ENCODE measurements at regions of chr1 and their contacts with region 1.

Region 1: GRCh38 chr1:55428944-55429931 is 214.1 kb upstream of the USP24 start:
- DNase-seq: peak; percentile 95 to 100
- H3K4me3 ChIP-seq: no peak overlapping the region
- H3K27ac ChIP-seq: peak overlapping the region; percentile 77
- H3K4me1 ChIP-seq: peaks cover 47% of the 10 kb centered on the region
- H3K27me3 ChIP-seq: no peaks in the 10 kb centered on the region
- CTCF ChIP-seq: no peak

Region 2: DNA sequence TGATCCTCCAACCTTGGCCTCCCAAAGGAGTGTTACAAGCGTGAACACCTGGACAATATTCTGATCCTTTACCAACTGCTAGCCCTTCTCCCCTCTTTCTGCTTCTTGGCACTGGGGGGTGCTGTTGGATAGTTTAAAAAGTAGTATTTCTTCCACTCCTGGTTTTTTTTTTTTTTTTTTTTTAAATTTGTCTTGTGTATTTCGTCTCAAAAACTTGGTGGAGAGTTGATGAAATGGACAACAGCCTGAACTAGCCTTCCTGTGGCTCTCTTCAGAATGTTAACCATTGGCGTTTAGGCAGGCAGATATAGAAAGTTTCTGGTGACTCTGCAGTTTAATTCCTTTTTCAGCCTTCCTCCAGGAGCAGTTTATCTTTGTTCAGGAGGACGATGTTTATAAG is 144.4 kb before region 1 on chr1:
- CTCF ChIA-PET with region 1: no interaction called
- POLR2A ChIA-PET with region 1: no interaction called
- intact Hi-C with region 1: loop called (anchors 5 kb)
- DNase-seq: peak in 1 of 2 experiments; percentile 41
- H3K4me3 ChIP-seq: no peak overlapping the region
- H3K27ac ChIP-seq: no peak overlapping the region
- H3K4me1 ChIP-seq: peaks cover 4% of the 10 kb centered on the region; the same call in 1 of the 2 replicates
- H3K27me3 ChIP-seq: no peaks in the 10 kb centered on the region
- CTCF ChIP-seq: peak; percentile 79

Region 3: DNA sequence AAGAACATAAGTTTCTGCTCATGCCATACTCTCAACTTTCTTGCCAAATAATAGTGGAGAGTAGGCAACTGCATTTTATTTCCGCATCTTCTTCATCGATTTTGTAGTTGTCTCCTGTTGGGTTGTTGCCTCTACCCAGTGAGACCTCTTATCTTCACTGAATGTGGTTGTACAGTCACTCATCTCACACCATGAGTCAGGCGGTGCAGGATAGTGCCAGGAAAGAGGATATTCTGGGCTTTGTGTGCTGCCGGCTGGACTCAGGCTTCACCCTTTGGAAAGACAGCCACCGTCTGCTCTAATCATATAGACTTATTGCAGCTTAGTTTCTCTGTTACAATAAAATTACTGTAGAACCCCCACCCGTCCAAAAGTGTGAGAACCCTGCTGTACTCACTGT is 59.8 kb before region 1 on chr1:
- CTCF ChIA-PET with region 1: no interaction called
- POLR2A ChIA-PET with region 1: no interaction called
- intact Hi-C with region 1: no loop called
- DNase-seq: no peak
- H3K4me3 ChIP-seq: no peak overlapping the region
- H3K27ac ChIP-seq: no peak overlapping the region
- H3K4me1 ChIP-seq: no peaks in the 10 kb centered on the region
- H3K27me3 ChIP-seq: no peaks in the 10 kb centered on the region
- CTCF ChIP-seq: no peak

Region 4: DNA sequence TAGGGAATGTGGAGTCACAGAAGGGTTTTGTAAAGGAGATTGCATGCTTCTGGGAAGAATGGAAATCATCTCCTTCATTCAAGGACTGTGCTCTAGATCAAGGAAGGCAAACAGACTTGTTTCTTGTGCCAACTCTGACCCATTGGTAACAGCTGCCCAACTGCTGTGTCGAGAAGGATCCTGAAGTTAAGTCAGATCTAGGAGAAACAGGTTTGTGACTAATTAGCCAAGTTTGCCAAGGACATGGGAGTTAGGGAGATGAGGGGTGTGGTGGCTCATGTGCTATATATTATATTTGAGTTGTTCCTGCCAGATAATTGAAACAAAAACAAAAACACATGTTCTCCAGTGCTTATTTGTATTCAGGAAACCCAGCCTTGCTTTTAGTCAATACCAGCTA is 37.1 kb after region 1 on chr1:
- CTCF ChIA-PET with region 1: no interaction called
- POLR2A ChIA-PET with region 1: no interaction called
- intact Hi-C with region 1: loop called (anchors 2 kb)
- DNase-seq: peak; percentile 40 to 91
- H3K4me3 ChIP-seq: no peak overlapping the region
- H3K27ac ChIP-seq: peak overlapping the region; percentile 54
- H3K4me1 ChIP-seq: peaks cover 22% of the 10 kb centered on the region
- H3K27me3 ChIP-seq: no peaks in the 10 kb centered on the region
- CTCF ChIP-seq: no peak

Region 5: GRCh38 chr1:55694310-55694801 is 265.1 kb after region 1 on chr1:
- CTCF ChIA-PET with region 1: no interaction called
- POLR2A ChIA-PET with region 1: no interaction called
- intact Hi-C with region 1: loop called (anchors 1 kb)
- DNase-seq: peak; percentile 65 to 70
- H3K4me3 ChIP-seq: no peak overlapping the region
- H3K27ac ChIP-seq: no peak overlapping the region
- H3K4me1 ChIP-seq: no peaks in the 10 kb centered on the region
- H3K27me3 ChIP-seq: no peaks in the 10 kb centered on the region
- CTCF ChIP-seq: no peak

Region 6: GRCh38 chr1:55781944-55782482 is 352.8 kb after region 1 on chr1:
- CTCF ChIA-PET with region 1: no interaction called
- POLR2A ChIA-PET with region 1: no interaction called
- intact Hi-C with region 1: loop called (anchors 1 kb)
- DNase-seq: peak in 1 of 2 experiments; percentile 77
- H3K4me3 ChIP-seq: no peak overlapping the region
- H3K27ac ChIP-seq: no peak overlapping the region
- H3K4me1 ChIP-seq: peaks cover 47% of the 10 kb centered on the region
- H3K27me3 ChIP-seq: no peaks in the 10 kb centered on the region
- CTCF ChIP-seq: no peak

Region 7: GRCh38 chr1:56284928-56285327 is 855.7 kb after region 1 on chr1:
- CTCF ChIA-PET with region 1: no interaction called
- POLR2A ChIA-PET with region 1: no interaction called
- intact Hi-C with region 1: loop called (anchors 5 kb)
- DNase-seq: peak; percentile 36 to 90
- H3K4me3 ChIP-seq: no peak overlapping the region
- H3K27ac ChIP-seq: peak overlapping the region; percentile 89
- H3K4me1 ChIP-seq: peaks cover 48% of the 10 kb centered on the region
- H3K27me3 ChIP-seq: no peaks in the 10 kb centered on the region
- CTCF ChIP-seq: no peak

Region 8: GRCh38 chr1:56516539-56517252 is 1087.5 kb after region 1 on chr1:
- CTCF ChIA-PET with region 1: no interaction called
- POLR2A ChIA-PET with region 1: no interaction called
- intact Hi-C with region 1: loop called (anchors 5 kb)
- DNase-seq: peak; percentile 59 to 96
- H3K4me3 ChIP-seq: peak overlapping the region; percentile 60
- H3K27ac ChIP-seq: peak overlapping the region; percentile 99
- H3K4me1 ChIP-seq: peaks cover 41% of the 10 kb centered on the region
- H3K27me3 ChIP-seq: no peaks in the 10 kb centered on the region
- CTCF ChIP-seq: no peak